ENCODE measurements at regions of chr20 and their contacts with region 1.

Region 1: GRCh38 chr20:62136283-62137091 is 6.7 kb downstream of the PSMA7 start:
- DNase-seq: no peak
- H3K4me3 ChIP-seq: no peak overlapping the region
- H3K27ac ChIP-seq: peak overlapping the region in 3 of 4 donors; percentile 29 to 69 (median 56)
- H3K4me1 ChIP-seq: peaks cover 46 to 67% (median 50%) of the 10 kb centered on the region in 4 donors
- H3K27me3 ChIP-seq: no peaks in the 10 kb centered on the region
- CTCF ChIP-seq: peak; percentile 68 to 85 (median 79)
- EP300 ChIP-seq: no peak
- POLR2A ChIP-seq: no peak

Region 2: DNA sequence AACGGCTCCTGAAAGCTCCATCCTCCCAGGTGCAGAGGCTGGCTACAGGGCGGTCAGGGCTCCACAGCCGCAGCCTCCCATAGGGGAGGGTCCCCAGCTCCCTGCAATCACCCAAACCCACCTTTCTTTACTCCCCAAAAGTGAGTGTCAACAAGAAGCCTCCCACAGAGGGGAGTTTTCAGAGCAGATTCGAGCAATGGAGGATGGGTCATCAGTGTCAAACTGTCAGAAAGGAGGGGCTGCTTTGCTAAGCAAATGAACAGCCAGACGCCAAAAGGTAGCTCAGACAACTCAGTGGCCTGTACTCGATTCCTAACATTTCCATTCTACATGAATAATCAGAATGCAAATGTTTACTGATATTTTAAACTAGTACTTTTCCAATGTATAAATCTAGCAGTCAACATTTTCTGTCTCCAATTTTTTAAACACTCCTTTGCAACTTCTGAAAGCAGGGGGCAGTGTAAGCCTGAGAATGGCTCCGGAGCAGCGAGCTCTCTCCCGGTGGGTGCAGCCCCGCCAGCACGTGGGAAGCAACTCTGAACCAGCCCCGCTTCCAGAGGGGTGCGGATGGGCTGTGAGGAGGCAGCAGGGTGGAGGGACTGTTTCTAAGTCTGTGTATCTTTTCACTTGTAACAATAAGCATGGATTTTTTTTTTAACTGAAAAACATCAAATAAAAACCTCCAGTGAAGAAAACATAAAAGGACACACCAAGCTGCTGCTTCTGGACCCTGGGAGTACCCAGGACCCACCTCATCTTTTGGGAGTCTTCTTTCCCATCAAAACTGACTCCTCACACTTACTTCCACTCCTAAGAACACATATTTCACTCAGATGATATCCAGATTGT is 125.7 kb before region 1 on chr20:
- intact Hi-C with region 1: loop called (anchors 5 kb)
- DNase-seq: no peak
- H3K4me3 ChIP-seq: no peak overlapping the region
- H3K27ac ChIP-seq: no peak overlapping the region
- H3K4me1 ChIP-seq: peaks cover 0 to 27% (median 19%) of the 10 kb centered on the region in 4 donors
- H3K27me3 ChIP-seq: no peaks in the 10 kb centered on the region
- CTCF ChIP-seq: peak; percentile 56 to 68 (median 58)
- EP300 ChIP-seq: no peak
- POLR2A ChIP-seq: no peak

Region 3: GRCh38 chr20:62025832-62026563 is 110.5 kb before region 1 on chr20:
- intact Hi-C with region 1: loop called (anchors 5 kb)
- DNase-seq: no peak
- H3K4me3 ChIP-seq: no peak overlapping the region
- H3K27ac ChIP-seq: peak overlapping the region in 2 of 4 donors; percentile 17 to 34
- H3K4me1 ChIP-seq: peaks cover 34 to 64% (median 48%) of the 10 kb centered on the region in 4 donors
- H3K27me3 ChIP-seq: peaks cover 0 to 4% (median 0%) of the 10 kb centered on the region in 4 donors
- CTCF ChIP-seq: peak; percentile 43 to 72 (median 61)
- EP300 ChIP-seq: no peak
- POLR2A ChIP-seq: no peak

Region 4: DNA sequence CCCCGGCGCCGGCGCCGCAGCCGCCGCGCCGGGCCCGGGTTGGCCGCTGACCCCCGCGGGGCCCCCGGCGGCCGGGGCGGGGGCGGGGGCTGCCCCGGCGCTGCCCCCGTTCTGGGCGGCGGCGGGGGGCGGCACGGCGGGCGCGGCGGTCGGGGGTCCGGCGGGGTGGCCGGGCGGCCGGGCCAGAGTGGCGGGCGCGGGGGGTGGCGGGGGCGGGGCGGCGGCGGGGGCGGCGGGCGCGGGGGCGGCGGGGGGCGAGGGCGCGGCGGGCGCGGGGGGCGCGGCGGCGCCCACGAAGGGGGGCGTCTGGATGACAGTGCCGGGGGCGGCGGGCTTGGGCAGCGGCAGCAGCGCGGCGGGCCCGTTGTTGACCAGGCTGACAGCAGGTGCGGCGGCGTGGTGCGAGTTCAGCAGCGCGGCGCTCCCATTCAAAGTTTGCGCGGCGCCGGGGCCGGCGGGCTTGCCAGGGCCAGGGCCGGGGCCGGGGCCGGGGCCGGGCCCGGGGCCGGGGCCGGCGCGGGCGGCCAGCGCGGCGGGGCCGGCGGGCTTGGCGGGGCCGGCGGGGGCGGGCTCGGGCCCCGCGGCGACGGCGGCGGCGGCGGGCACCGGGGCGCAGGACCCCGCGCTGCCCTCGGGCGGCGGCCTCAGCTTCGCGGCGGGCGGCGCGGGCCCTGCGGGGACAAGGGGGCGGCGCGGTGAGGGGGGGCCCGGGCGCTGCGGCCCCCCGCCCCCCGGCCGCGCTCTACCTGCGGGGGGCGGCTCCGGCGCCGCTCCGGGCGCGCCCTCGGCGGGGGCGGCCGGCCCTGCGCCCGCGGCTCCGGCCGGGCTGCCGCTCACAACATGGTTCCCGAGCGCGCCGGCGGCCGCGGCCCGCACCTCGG is 71.5 kb before region 1 on chr20:
- intact Hi-C with region 1: loop called (anchors 5 kb)
- DNase-seq: no peak
- H3K4me3 ChIP-seq: peak overlapping the region; percentile 67 to 86 (median 74)
- H3K27ac ChIP-seq: peak overlapping the region; percentile 75 to 93 (median 87)
- H3K4me1 ChIP-seq: peaks cover 36 to 48% (median 40%) of the 10 kb centered on the region in 4 donors
- H3K27me3 ChIP-seq: no peaks in the 10 kb centered on the region
- CTCF ChIP-seq: no peak
- EP300 ChIP-seq: no peak
- POLR2A ChIP-seq: no peak

Region 5: DNA sequence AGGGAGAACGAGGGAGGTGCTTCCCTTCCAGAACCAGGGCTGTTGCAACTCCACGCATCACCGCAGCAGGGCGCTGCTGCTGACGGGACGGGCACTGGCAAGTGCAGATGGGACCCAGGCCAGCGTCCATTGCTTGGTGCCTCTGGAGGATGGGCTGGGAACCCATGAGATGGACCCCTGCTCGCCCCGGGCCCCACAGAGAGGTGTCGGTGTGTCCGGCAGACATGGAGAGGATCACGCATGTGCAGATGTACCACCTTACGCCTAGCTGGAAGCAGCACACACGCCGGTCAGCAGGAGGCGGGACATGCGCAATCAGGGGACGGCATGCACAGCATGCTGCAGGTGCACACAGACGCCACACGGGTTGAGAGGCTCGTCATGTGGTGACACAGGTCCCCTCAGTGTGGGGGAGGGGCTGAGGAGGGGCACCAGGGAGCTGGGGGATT is 264.9 kb after region 1 on chr20:
- intact Hi-C with region 1: no loop called
- DNase-seq: no peak
- H3K4me3 ChIP-seq: no peak overlapping the region
- H3K27ac ChIP-seq: no peak overlapping the region
- H3K4me1 ChIP-seq: peaks cover 12 to 21% (median 18%) of the 10 kb centered on the region in 4 donors
- H3K27me3 ChIP-seq: no peaks in the 10 kb centered on the region
- CTCF ChIP-seq: no peak
- EP300 ChIP-seq: no peak
- POLR2A ChIP-seq: no peak

Measured in esophagus muscularis mucosa (tissue), 4 donors.